ENCODE measurements at regions of chr7 and their contacts with region 1.

Region 1: DNA sequence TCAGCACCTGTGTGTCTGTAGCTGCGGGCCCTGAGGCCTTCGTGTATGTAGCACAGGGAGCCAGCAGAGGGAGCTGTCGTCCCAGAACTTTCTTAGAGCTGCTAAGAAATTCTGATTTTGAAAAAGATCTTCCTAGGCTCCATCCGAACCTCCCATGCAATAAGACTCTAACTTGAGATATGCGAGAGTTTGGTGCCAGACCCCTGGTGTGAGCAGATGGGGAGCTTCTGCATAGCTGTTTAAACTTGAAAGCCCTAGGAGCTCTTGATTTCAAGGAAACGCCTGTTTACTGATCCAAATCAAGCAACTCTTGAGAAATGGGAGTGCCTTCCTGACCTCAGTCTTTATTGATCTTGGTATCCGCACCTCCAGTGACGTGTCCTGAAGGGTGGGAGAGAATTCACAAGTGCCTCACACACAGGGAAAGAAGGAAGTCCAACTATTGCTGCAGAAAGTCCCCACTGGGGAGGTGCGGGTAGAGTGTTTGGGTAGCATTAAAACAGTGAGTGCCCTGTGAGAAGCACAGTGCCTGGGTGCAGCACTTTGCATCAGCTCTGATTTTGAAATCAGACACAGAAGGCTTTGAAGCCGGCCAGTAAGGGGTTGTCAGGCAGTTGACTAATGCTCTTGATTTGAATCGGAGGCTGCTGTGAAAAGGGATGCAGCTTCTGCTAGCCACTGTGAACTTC is 66.4 kb upstream of the STRIP2 start:
- DNase-seq: peak; percentile 86
- ATAC-seq: peak; percentile 96
- H3K4me3 Mint-ChIP-seq: no peak overlapping the region
- H3K27ac Mint-ChIP-seq: peak overlapping the region; percentile 89
- H3K4me1 Mint-ChIP-seq: peaks cover 37% of the 10 kb centered on the region
- H3K27me3 Mint-ChIP-seq: no peaks in the 10 kb centered on the region
- CTCF ChIP-seq: peak; percentile 81

Region 2: DNA sequence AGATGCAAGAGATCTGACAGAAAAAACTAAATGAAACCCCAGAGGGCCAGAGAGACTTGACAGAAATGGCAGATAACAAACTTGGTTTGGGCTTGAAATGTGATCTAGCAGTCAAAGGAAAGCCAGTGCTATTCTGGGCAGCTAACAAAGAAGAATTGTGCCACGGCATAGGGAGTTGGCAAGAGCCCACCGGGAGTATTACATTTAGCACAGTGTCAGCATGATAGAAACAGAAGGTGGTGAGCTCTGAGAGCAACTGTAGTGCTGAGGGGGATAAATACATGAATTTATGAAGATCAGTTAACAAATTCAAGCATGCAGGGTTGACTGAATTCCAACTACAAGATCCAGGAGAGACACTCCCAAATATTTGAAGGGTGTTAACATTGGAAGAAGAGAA is 51.9 kb before region 1 on chr7:
- CTCF ChIA-PET with region 1: no interaction called
- POLR2A ChIA-PET with region 1: no interaction called
- DNase-seq: no peak
- ATAC-seq: no peak
- H3K4me3 Mint-ChIP-seq: no peak overlapping the region
- H3K27ac Mint-ChIP-seq: no peak overlapping the region
- H3K4me1 Mint-ChIP-seq: no peaks in the 10 kb centered on the region; the same call in none of the 2 replicates
- H3K27me3 Mint-ChIP-seq: no peaks in the 10 kb centered on the region
- CTCF ChIP-seq: no peak

Region 3: GRCh38 chr7:129343099-129343700 is 24.6 kb before region 1 on chr7:
- CTCF ChIA-PET with region 1: interaction called, 25 read pairs
- POLR2A ChIA-PET with region 1: no interaction called
- DNase-seq: no peak
- ATAC-seq: no peak
- H3K4me3 Mint-ChIP-seq: no peak overlapping the region
- H3K27ac Mint-ChIP-seq: no peak overlapping the region
- H3K4me1 Mint-ChIP-seq: peaks cover 18% of the 10 kb centered on the region
- H3K27me3 Mint-ChIP-seq: no peaks in the 10 kb centered on the region
- CTCF ChIP-seq: peak; percentile 25; the same call in 1 of the 2 replicates

Region 4: GRCh38 chr7:129351320-129351719 is 16.5 kb before region 1 on chr7:
- CTCF ChIA-PET with region 1: interaction called, 10 read pairs
- POLR2A ChIA-PET with region 1: no interaction called
- DNase-seq: no peak
- ATAC-seq: no peak
- H3K4me3 Mint-ChIP-seq: no peak overlapping the region
- H3K27ac Mint-ChIP-seq: no peak overlapping the region
- H3K4me1 Mint-ChIP-seq: peaks cover 2% of the 10 kb centered on the region; the same call in 1 of the 2 replicates
- H3K27me3 Mint-ChIP-seq: no peaks in the 10 kb centered on the region
- CTCF ChIP-seq: no peak

Region 5: DNA sequence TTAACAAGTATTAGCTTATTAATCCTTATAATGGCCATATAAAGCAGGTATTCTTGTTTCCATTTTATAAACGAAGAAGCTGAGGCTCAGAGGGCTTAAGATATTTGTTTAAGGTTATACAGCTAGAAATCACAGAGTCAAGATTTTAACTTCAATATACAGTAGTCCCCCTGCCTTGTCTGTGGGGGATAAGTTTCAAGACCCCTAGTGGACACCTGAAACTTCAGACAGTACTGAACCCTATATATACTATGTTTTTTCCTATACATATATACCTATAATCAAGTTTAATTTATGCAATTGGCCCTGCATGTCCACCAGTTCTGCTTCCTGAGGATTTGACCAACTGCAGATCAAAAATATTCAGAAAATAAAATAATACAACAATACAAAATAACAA is 22.0 kb after region 1 on chr7:
- CTCF ChIA-PET with region 1: interaction called, 10 read pairs
- POLR2A ChIA-PET with region 1: no interaction called
- DNase-seq: no peak
- ATAC-seq: no peak
- H3K4me3 Mint-ChIP-seq: no peak overlapping the region
- H3K27ac Mint-ChIP-seq: no peak overlapping the region
- H3K4me1 Mint-ChIP-seq: peaks cover 33% of the 10 kb centered on the region
- H3K27me3 Mint-ChIP-seq: no peaks in the 10 kb centered on the region
- CTCF ChIP-seq: no peak

Region 6: GRCh38 chr7:129468087-129468486 is 100.2 kb after region 1 on chr7:
- CTCF ChIA-PET with region 1: interaction called, 59 read pairs
- POLR2A ChIA-PET with region 1: no interaction called
- DNase-seq: no peak
- ATAC-seq: no peak
- H3K4me3 Mint-ChIP-seq: no peak overlapping the region
- H3K27ac Mint-ChIP-seq: no peak overlapping the region
- H3K4me1 Mint-ChIP-seq: peaks cover 21% of the 10 kb centered on the region
- H3K27me3 Mint-ChIP-seq: no peaks in the 10 kb centered on the region
- CTCF ChIP-seq: no peak

Region 7: DNA sequence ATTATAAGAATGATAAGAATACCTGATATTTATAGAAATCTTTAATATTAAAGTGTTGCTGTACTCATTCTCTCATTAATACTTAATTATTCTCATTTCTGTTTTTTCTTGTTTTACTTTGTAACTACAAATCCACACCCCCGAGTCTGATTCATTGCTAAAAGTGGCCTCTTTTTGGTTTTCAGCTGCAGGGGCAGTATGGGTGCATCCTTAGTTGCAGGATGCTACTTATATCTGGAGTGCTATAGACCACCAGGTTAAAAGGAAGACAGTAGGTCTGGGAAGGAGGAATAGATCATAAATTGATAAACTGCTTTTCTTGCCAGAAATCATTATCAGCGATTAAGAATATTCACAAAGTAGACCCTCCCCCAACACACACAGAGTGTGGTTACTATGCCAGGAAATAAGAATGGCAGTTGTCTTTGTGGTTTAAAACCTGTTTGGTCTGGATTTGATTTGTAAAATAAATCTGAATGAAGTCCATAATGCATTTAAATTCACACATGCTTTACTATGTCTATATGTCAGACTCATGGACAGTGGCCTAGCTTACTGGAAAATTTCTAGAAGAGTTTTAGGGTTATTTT is 340.2 kb after region 1 on chr7:
- CTCF ChIA-PET with region 1: no interaction called
- POLR2A ChIA-PET with region 1: no interaction called
- DNase-seq: no peak
- ATAC-seq: no peak
- H3K4me3 Mint-ChIP-seq: no peak overlapping the region
- H3K27ac Mint-ChIP-seq: no peak overlapping the region
- H3K4me1 Mint-ChIP-seq: no peaks in the 10 kb centered on the region
- H3K27me3 Mint-ChIP-seq: no peaks in the 10 kb centered on the region
- CTCF ChIP-seq: no peak

Measured in WTC11 (cell line).